Activated B cell treated with CpG ODN at 0.5 μM for 24 hours (primary cell): ENCODE measurements at regions of chr11 and their contacts with region 1.

Region 1: GRCh38 chr11:64317957-64318693 is at the start of gene PRDX5:
- DNase-seq: peak; percentile 91
- ATAC-seq: peak; percentile 81
- H3K4me3 Mint-ChIP-seq: peak within 1 kb of the TSS; percentile 94
- H3K27ac Mint-ChIP-seq: peak within 1 kb of the TSS; percentile 99
- H3K4me1 Mint-ChIP-seq: peaks cover 24% of the 10 kb centered on the region
- H3K27me3 Mint-ChIP-seq: no peaks in the 10 kb centered on the region
- CTCF ChIP-seq: no peak
- total RNA-seq, gene PRDX5: 73.6 and 85.8 TPM in 2 replicates

Region 2: DNA sequence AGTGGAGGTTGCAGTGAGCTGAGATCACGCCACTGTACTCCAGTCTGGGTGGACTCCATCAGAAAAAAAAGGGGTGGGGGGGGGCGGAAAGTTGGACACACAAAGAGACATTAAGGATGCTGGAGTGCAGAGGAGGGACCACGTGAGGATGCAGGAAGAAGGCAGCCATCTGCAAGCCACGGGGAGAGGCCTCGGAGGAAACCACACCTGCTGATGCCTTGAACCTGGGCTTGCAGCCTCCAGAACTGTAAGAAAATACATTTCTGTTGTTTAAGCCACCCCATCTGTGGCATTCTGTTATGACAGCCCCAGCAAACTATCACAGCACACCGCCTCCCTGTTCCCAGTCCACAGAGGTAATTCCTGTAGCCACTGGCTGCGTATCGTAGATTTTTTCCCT is 141.4 kb before region 1 on chr11:
- CTCF ChIA-PET with region 1: no interaction called
- POLR2A ChIA-PET with region 1: no interaction called
- intact Hi-C with region 1: no loop called
- DNase-seq: no peak
- ATAC-seq: no peak
- H3K4me3 Mint-ChIP-seq: no peak overlapping the region
- H3K27ac Mint-ChIP-seq: no peak overlapping the region
- H3K4me1 Mint-ChIP-seq: peaks cover 14% of the 10 kb centered on the region
- H3K27me3 Mint-ChIP-seq: no peaks in the 10 kb centered on the region
- CTCF ChIP-seq: no peak

Region 3: DNA sequence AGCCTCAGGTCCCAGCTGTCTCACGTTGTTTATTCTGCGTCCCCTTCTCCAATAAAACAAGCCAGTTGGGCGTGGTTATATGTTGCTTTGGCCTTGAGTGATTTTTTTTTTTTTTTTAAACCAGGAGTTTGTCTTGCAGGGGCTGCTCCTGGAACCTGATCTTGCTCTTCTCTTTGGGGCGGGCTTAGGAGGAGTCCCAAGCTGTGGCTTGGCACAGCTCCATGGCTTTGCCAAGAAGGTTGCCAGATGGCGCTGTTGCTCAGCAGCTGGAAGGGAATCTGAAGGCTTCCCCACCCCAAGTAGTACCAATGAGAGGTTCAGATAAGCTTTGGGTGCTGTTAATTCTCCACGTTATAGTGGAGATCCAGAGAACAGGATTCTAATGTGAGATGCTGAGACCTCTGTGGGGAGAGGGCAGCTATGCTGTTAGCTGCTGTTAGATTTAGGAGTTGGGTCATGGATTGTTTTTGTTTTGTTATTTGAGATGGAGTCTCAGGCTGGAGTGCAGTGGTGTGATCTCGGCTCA is 113.6 kb before region 1 on chr11:
- CTCF ChIA-PET with region 1: interaction called, 14 read pairs
- POLR2A ChIA-PET with region 1: interaction called, 23 read pairs
- intact Hi-C with region 1: no loop called
- DNase-seq: peak; percentile 49
- ATAC-seq: peak; percentile 22
- H3K4me3 Mint-ChIP-seq: peak overlapping the region; percentile 73
- H3K27ac Mint-ChIP-seq: peak overlapping the region; percentile 83
- H3K4me1 Mint-ChIP-seq: peaks cover 44% of the 10 kb centered on the region
- H3K27me3 Mint-ChIP-seq: no peaks in the 10 kb centered on the region
- CTCF ChIP-seq: no peak

Region 4: GRCh38 chr11:64269380-64270234 is 48.5 kb before region 1 on chr11:
- CTCF ChIA-PET with region 1: interaction called, 6 read pairs
- POLR2A ChIA-PET with region 1: interaction called, 40 read pairs
- intact Hi-C with region 1: loop called (anchors 1 kb)
- DNase-seq: peak; percentile 97
- ATAC-seq: peak; percentile 72
- H3K4me3 Mint-ChIP-seq: peak overlapping the region; percentile 97
- H3K27ac Mint-ChIP-seq: peak overlapping the region; percentile 95
- H3K4me1 Mint-ChIP-seq: peaks cover 23% of the 10 kb centered on the region
- H3K27me3 Mint-ChIP-seq: no peaks in the 10 kb centered on the region
- CTCF ChIP-seq: no peak

Region 5: GRCh38 chr11:64304316-64305072 is 13.6 kb before region 1 on chr11:
- CTCF ChIA-PET with region 1: interaction called, 28 read pairs
- POLR2A ChIA-PET with region 1: interaction called, 40 read pairs
- intact Hi-C with region 1: loop called (anchors 1 kb)
- DNase-seq: peak; percentile 84
- ATAC-seq: peak; percentile 13
- H3K4me3 Mint-ChIP-seq: peak overlapping the region; percentile 87
- H3K27ac Mint-ChIP-seq: peak overlapping the region; percentile 89
- H3K4me1 Mint-ChIP-seq: peaks cover 34% of the 10 kb centered on the region
- H3K27me3 Mint-ChIP-seq: peaks cover 11% of the 10 kb centered on the region
- CTCF ChIP-seq: peak; percentile 22

Region 6: DNA sequence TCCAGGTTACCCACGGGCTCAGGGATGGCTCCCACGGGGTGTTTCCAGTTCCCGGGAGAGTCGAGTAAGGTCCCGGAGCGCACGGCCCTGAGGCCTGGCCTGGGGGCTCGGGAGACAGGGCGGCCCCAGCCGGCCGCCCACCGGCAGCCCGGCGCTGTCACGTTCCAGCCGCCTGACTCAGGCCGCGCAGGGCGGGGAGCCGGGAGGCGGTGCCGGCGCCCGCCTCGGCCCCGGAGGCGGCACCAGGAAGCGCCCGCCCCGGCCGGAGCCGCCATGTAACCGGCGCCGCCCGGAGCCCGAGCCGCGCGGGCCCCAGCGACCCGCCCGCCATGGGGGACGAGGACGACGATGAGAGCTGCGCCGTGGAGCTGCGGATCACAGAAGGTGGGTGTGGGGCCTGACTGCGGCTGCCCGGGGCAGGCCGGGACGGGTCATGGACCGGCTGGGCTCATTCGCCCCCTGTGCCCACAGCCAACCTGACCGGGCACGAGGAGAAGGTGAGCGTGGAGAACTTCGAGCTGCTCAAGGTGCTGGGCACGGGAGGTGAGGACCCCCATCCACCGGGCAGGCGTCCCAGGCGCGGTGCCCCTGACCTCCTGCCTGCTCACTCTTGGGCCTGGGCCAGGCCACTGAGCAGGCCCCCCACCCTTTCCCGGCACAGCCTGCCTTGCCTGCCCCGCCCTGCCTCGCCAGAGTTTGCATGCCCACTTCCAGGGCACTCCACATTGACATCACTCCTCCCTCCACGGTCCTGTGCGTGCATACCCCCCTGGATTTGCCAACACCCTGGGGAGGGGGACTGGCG is 41.0 kb after region 1 on chr11 and contains the start of gene RPS6KA4:
- CTCF ChIA-PET with region 1: interaction called, 138 read pairs
- POLR2A ChIA-PET with region 1: interaction called, 61 read pairs
- intact Hi-C with region 1: loop called (anchors 1 kb)
- DNase-seq: peak; percentile 55
- ATAC-seq: peak; percentile 72
- H3K4me3 Mint-ChIP-seq: peak within 1 kb of the TSS; percentile 82
- H3K27ac Mint-ChIP-seq: peak within 1 kb of the TSS; percentile 53
- H3K4me1 Mint-ChIP-seq: peaks cover 47% of the 10 kb centered on the region
- H3K27me3 Mint-ChIP-seq: no peaks in the 10 kb centered on the region
- CTCF ChIP-seq: no peak
- total RNA-seq, gene RPS6KA4: 18.0 and 22.6 TPM in 2 replicates

Region 7: GRCh38 chr11:64472593-64473455 is 154.7 kb after region 1 on chr11:
- CTCF ChIA-PET with region 1: no interaction called
- POLR2A ChIA-PET with region 1: no interaction called
- intact Hi-C with region 1: no loop called
- DNase-seq: no peak
- ATAC-seq: no peak
- H3K4me3 Mint-ChIP-seq: no peak overlapping the region
- H3K27ac Mint-ChIP-seq: no peak overlapping the region
- H3K4me1 Mint-ChIP-seq: no peaks in the 10 kb centered on the region
- H3K27me3 Mint-ChIP-seq: peaks cover 37% of the 10 kb centered on the region
- CTCF ChIP-seq: no peak

Region 8: DNA sequence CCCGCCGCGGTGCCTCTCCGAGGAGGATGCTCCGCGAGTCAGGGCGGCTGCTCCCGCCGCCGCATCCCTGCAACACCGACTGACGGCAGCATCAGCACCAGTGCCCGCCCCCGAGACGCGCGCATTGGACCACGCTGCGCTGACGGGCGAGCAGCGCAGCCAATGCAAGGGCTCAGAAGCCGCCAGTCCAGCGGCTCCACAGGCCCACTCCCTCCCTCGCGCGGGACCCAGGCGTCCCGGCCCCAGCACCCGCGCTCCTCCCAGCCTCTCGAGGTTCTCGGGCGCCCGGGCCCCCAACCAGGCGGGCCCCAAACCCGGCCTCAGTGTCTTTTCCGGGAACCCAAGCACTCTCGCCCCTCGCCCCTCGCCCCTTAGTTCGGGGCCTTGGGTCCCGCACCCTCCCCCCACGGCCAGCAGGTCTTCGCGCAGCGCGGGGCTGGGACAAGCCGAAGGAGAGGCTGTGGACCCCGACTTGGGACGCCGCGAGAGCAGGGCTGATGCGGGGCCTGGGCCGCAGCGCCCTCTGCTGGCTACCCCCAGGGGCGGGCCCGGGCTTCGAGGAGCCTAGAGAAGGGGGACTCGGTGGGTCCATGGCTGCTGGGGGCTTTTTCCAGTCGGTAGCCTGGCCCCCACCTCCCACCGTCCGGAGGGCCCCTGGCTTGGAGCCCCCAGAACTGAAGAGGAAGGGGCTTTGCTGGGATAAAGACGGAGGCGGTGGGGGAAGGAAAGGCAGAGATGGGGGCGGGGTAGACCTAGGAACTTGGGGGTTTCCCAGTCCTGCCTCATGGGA is 405.2 kb after region 1 on chr11 and contains the start of gene NRXN2:
- CTCF ChIA-PET with region 1: interaction called, 3 read pairs
- POLR2A ChIA-PET with region 1: no interaction called
- intact Hi-C with region 1: loop called (anchors 1 kb)
- DNase-seq: peak; percentile 88
- ATAC-seq: peak; percentile 89
- H3K4me3 Mint-ChIP-seq: peak within 1 kb of the TSS; percentile 81
- H3K27ac Mint-ChIP-seq: peak within 1 kb of the TSS; percentile 76
- H3K4me1 Mint-ChIP-seq: peaks cover 22% of the 10 kb centered on the region
- H3K27me3 Mint-ChIP-seq: peaks cover 30% of the 10 kb centered on the region
- CTCF ChIP-seq: peak; percentile 64
- total RNA-seq, gene NRXN2: 0.54 and 0.73 TPM in 2 replicates